GM10248 (cell line): ENCODE measurements at regions of chr7 and their contacts with region 1.

Region 1: GRCh38 chr7:22110227-22110839 is 164.6 kb upstream of the CDCA7L start:
- DNase-seq: peak; percentile 68
- CTCF ChIP-seq: peak; percentile 84

Region 2: DNA sequence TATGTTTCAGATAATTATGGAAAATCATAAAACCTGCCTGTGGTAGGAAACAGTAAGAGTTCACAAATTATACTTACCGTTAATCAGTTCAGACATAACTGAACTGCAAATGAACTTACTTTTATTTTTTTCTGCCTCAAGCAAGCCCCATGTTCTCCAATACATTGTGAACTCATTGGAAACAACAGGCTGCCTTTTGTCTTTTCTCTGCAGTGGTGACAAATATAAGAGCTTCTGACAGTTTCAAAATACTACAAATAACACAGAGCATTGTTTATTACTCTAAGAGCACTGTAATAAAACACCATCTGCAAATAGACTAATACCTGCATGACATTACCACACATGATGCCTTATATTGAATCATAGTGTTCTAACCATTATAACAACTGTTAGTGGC is 70.7 kb before region 1 on chr7:
- CTCF ChIA-PET with region 1: no interaction called
- POLR2A ChIA-PET with region 1: no interaction called
- DNase-seq: no peak
- CTCF ChIP-seq: no peak

Region 3: DNA sequence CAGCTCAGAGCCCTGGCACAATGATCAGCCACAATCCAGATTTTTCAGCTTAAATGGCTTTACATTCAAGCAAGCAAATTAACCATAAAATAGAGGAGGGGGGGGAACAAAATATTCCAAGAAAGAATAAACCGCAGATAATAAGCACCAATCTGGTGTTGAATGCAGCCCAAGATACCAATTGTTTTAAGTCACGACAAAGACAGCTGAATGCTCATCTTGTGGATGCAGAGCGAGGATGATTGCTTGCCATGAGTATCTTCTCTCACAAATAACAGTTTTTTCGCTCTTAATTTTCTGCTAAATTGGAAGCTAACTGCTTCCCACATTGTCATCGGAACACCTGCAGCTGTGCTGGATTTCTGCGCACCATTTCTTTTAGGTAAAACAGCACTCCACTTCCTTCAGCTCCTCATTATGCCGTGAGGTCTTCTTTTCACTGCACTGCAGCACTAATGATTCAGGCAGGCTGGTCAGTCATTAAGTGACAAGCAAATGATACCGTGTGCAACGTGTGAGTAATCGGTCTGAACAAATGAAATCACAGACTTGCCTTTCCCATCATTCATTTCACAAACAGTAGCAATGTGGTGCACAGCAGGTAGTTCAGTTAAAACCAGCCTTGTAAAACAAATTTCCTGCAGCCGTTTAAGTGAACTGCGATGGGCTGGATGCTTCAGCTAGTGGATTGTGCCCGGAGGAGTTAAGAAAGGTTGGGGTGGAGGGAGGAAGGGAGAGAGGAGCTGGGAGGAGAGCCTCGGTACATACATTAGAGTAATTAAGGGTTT is 58.3 kb before region 1 on chr7:
- CTCF ChIA-PET with region 1: no interaction called
- POLR2A ChIA-PET with region 1: no interaction called
- DNase-seq: no peak
- CTCF ChIP-seq: no peak

Region 4: DNA sequence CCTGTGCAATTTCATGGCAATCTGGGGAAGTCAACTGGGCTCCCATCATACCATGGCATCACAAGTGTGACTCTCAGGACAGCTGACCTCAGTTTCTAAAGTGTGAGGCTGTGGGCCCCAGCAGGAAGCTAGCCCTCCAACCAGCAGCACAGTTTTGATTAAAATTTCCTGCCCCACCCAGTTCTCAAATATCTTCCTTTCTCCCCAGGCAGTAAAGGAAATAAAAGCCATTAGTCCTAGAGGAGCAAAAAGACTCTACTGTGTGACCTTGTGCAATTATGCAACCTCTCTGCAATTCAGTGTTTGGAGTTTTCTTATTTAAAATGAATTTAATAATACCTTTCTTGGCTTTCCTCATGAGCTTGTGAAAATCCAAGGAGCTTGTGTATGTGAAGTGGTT is 21.5 kb before region 1 on chr7:
- CTCF ChIA-PET with region 1: interaction called, 32 read pairs
- POLR2A ChIA-PET with region 1: no interaction called
- DNase-seq: no peak
- CTCF ChIP-seq: no peak

Region 5: DNA sequence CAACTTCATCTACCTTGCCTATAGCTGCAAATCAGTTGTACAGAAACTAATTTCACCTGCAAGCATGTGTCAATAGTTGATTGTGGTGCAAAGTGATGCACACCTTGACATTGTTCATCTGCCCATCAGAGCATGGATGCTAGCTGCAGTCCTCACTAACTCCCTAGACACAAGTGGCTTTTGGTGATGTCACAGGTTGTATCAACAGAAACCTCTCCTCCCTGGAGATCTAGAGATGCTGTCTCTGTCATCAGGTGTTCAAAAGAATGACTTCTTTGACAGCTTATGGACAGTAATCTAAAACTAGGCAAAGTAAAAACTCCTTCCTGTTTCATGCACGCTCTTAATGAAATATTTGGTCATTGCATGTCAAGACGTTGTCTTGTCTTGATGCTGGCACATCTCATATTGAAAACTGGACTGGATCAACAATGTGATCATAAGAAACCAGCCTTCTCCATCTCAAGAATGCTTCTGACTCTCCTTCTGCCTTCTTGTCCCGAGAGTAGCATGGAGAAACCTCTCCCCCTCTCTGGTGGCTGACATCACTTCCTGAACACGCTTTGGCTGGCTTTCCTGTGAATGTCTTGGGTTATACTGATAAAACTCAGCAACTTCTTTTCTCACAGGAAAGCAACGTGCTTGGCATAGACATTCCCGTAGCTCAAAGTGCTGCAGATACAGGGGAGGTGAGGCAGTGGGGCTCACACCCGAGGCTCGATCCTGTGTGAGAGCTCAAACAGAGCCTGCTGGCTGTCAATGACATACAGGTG is 11.6 kb after region 1 on chr7:
- CTCF ChIA-PET with region 1: interaction called, 13 read pairs
- POLR2A ChIA-PET with region 1: no interaction called
- DNase-seq: no peak
- CTCF ChIP-seq: no peak

Region 6: GRCh38 chr7:22140578-22140977 is 30.2 kb after region 1 on chr7:
- CTCF ChIA-PET with region 1: interaction called, 19 read pairs
- POLR2A ChIA-PET with region 1: no interaction called
- DNase-seq: no peak
- CTCF ChIP-seq: no peak

Region 7: GRCh38 chr7:22481726-22482125 is 371.4 kb after region 1 on chr7:
- CTCF ChIA-PET with region 1: interaction called, 94 read pairs
- POLR2A ChIA-PET with region 1: no interaction called
- DNase-seq: peak; percentile 4
- CTCF ChIP-seq: no peak

Region 8: GRCh38 chr7:22499044-22499443 is 388.7 kb after region 1 on chr7:
- CTCF ChIA-PET with region 1: interaction called, 19 read pairs
- POLR2A ChIA-PET with region 1: no interaction called
- DNase-seq: no peak
- CTCF ChIP-seq: no peak